ENCODE measurements at regions of chr1 and their contacts with region 1.

Region 1: DNA sequence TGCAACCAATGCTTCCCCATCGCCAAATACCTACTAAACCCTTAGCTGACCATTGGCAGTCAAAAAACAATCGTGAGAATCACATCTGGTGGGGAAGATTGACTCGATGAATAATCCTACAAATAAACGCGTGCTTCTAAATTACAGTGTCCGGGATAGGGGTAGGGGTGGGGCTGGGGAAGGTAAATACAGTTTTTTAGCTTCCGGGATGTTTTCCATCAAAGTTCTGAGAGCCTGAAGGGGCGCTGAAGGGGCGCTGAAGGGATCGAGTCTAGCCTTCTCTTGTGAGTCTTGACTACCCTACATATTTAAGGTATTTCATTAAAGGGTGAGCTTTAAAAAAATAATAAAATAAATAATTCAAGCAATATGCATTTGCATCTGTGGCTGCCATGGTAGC is 40.5 kb downstream of the RRAGC start:
- DNase-seq: no peak

Region 2: DNA sequence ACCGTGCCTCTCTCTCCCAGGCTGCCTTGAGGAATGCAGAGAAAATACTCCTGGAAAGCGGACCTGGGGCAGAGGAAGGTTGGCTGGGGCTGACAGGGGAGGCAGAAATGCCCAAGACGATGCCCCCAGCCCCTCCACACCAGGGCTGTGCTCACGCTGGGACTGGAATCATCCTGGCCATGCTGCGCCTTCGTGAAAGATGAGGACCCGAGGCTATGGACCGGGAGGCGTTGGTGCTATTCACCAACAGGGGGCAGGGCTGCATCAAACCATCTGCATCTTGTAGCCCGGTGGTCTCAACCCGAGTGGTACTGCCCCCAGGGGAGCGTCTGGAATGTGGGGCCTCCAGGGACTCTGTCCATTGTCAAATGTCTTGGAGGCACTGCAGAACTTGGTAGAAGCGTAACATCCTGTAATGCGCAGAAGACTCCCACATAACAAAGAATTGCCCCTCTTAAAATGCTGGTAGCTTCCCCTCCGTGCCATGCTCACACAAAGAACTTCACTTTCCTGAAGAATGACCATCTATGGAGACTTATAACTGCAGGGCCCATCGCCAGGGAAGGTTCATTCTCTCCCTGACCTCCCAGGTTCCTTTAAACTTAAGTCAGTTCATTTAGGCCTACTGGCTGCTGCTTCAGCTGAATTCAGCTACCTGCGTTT is 210.7 kb before region 1 on chr1:
- intact Hi-C with region 1: loop called (anchors 1 kb)
- DNase-seq: no peak

Measured in cardiac septum (tissue), 1 donor.